ENCODE measurements at regions of chr4 and their contacts with region 1.

Region 1: GRCh38 chr4:147096667-147097604 is 151.3 kb upstream of the TTC29 start:
- DNase-seq: peak; percentile 63
- H3K4me3 ChIP-seq: no peak overlapping the region
- H3K27ac ChIP-seq: no peak overlapping the region
- H3K4me1 ChIP-seq: no peaks in the 10 kb centered on the region
- H3K27me3 ChIP-seq: peaks cover 9 to 19% of the 10 kb centered on the region in 2 experiments
- CTCF ChIP-seq: peak; percentile 26 to 32
- POLR2A ChIP-seq: no peak

Region 2: GRCh38 chr4:146095091-146095690 is 1001.7 kb before region 1 on chr4:
- CTCF ChIA-PET with region 1: interaction called, 60 read pairs
- POLR2A ChIA-PET with region 1: no interaction called
- dilution Hi-C with region 1: no loop called
- intact Hi-C with region 1: loop called (anchors 1 kb)
- DNase-seq: peak; percentile 61
- H3K4me3 ChIP-seq: no peak overlapping the region
- H3K27ac ChIP-seq: no peak overlapping the region
- H3K4me1 ChIP-seq: no peaks in the 10 kb centered on the region
- H3K27me3 ChIP-seq: peaks cover 4 to 9% of the 10 kb centered on the region in 2 experiments
- CTCF ChIP-seq: peak; percentile 55 to 59
- POLR2A ChIP-seq: no peak

Region 3: GRCh38 chr4:147011411-147011810 is 85.5 kb before region 1 on chr4:
- CTCF ChIA-PET with region 1: interaction called, 447 read pairs
- POLR2A ChIA-PET with region 1: no interaction called
- dilution Hi-C with region 1: no loop called
- intact Hi-C with region 1: no loop called
- DNase-seq: no peak
- H3K4me3 ChIP-seq: no peak overlapping the region
- H3K27ac ChIP-seq: no peak overlapping the region
- H3K4me1 ChIP-seq: no peaks in the 10 kb centered on the region
- H3K27me3 ChIP-seq: peaks cover 9 to 11% of the 10 kb centered on the region in 2 experiments
- CTCF ChIP-seq: no peak
- POLR2A ChIP-seq: no peak

Region 4: GRCh38 chr4:147029296-147029695 is 67.6 kb before region 1 on chr4:
- CTCF ChIA-PET with region 1: interaction called, 447 read pairs
- POLR2A ChIA-PET with region 1: no interaction called
- dilution Hi-C with region 1: no loop called
- intact Hi-C with region 1: no loop called
- DNase-seq: no peak
- H3K4me3 ChIP-seq: no peak overlapping the region
- H3K27ac ChIP-seq: no peak overlapping the region
- H3K4me1 ChIP-seq: no peaks in the 10 kb centered on the region
- H3K27me3 ChIP-seq: peaks cover 4 to 7% of the 10 kb centered on the region in 2 experiments
- CTCF ChIP-seq: no peak
- POLR2A ChIP-seq: no peak

Region 5: DNA sequence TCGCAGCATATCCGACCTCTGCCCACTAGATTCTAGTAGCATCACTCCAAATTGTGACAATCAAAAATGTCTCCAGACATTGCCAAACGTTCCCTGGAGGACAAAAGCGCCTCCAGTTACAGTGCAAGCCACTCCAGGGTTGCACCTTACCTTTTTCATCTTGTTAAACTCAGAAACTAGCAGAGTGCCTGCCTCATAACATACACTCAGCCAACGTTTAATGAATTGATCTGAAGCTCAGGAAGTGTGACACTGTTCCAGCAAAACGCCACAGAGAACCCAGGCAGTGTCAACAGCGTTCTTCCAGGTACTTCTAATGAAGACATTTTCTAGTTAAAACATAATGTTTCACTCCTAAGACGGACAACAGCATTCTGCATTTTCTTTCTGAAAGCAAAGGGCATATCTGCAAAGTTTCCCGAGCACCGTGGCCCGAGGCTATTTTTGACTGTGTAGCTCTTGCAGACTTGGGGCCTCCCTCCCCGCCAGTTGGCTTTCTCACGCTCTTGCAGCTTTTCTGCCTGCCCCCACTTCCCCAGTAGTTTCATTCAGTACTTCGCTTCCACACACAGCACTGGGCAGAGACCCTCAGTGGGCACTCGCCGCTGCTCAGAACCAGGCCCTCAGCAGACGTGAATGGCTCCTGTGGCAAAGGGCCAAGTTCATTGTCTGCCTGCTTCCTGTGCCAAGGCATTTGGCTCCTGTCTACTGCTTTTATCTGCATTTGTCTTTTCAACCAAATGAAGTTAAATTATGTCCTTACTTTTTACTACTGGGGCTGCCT is 17.9 kb before region 1 on chr4:
- CTCF ChIA-PET with region 1: interaction called, 12 read pairs
- POLR2A ChIA-PET with region 1: no interaction called
- dilution Hi-C with region 1: no loop called
- intact Hi-C with region 1: no loop called
- DNase-seq: peak; percentile 53
- H3K4me3 ChIP-seq: no peak overlapping the region
- H3K27ac ChIP-seq: no peak overlapping the region
- H3K4me1 ChIP-seq: peaks cover 7% of the 10 kb centered on the region
- H3K27me3 ChIP-seq: peaks cover 5 to 11% of the 10 kb centered on the region in 2 experiments
- CTCF ChIP-seq: no peak
- POLR2A ChIP-seq: no peak

Region 6: DNA sequence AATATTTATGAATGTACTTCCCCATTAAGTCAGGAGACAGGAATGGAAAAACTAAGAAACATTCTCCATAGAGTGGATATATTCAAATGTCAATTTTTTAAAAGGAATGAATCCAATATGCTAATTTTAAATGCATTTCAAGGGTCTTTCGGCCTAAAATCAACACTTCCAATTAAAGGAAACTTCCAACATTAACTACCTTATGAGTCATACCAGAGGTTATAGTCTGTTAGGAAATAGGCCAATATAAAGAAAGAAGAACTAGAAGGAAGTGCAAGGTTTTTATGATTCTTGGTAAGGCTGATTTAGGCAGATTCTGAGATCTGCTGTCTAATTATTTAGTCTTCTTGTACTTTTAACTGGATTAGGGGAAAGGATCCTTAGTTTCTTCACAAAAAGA is 123.9 kb after region 1 on chr4:
- CTCF ChIA-PET with region 1: no interaction called
- POLR2A ChIA-PET with region 1: no interaction called
- dilution Hi-C with region 1: no loop called
- intact Hi-C with region 1: no loop called
- DNase-seq: peak; percentile 32
- H3K4me3 ChIP-seq: no peak overlapping the region
- H3K27ac ChIP-seq: no peak overlapping the region
- H3K4me1 ChIP-seq: no peaks in the 10 kb centered on the region
- H3K27me3 ChIP-seq: no peaks in the 10 kb centered on the region
- CTCF ChIP-seq: no peak
- POLR2A ChIP-seq: no peak

Region 7: GRCh38 chr4:147590249-147590920 is 493.4 kb after region 1 on chr4:
- CTCF ChIA-PET with region 1: interaction called, 28 read pairs
- POLR2A ChIA-PET with region 1: no interaction called
- dilution Hi-C with region 1: no loop called
- intact Hi-C with region 1: no loop called
- DNase-seq: peak; percentile 70
- H3K4me3 ChIP-seq: no peak overlapping the region
- H3K27ac ChIP-seq: no peak overlapping the region
- H3K4me1 ChIP-seq: no peaks in the 10 kb centered on the region
- H3K27me3 ChIP-seq: peaks cover 0 to 3% of the 10 kb centered on the region in 2 experiments
- CTCF ChIP-seq: peak; percentile 52 to 53
- POLR2A ChIP-seq: no peak

Measured in endothelial cell of umbilical vein (primary cell).